ENCODE measurements at regions of chr16 and their contacts with region 1.

Region 1: DNA sequence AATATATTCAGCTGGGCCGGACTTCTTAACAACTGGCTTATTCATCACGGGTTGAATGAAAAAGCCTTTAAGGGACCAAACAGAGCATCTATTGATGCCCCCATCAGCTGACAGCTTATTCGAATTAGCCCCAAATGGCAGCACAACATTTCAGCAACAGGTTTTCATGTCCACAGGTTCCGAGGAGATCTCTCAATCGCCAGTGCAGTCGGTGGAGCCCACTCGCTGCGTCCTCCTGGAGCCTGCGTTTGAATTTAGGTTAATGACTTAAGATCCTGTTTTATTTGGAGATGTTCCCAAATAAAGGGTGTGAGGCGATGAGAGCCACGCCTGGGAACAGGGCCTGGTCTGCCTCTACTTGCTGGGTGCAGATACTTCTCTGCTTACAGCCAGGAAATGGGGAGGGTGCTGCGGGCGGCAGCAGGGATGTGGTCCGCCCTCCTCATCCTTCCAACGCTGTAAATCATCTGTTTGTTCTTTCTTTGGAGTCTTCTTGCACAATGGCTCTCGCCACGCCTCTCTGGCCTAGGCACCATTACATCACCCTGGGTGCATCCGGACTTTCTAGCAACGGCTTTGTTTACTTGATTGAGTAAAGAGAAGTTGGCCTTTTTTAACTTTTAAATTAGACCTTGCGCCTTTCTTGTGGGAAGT is 22.6 kb downstream of the NDE1 start:
- DNase-seq: peak; percentile 91
- ATAC-seq: peak; percentile 95
- H3K4me3 Mint-ChIP-seq: peak overlapping the region; percentile 71
- H3K27ac Mint-ChIP-seq: peak overlapping the region; percentile 97
- H3K4me1 Mint-ChIP-seq: peaks cover 57% of the 10 kb centered on the region
- H3K27me3 Mint-ChIP-seq: no peaks in the 10 kb centered on the region

Region 2: GRCh38 chr16:15650019-15650697 is 22.5 kb before region 1 on chr16 and contains the start of gene NDE1:
- CTCF ChIA-PET with region 1: interaction called, 10 read pairs
- POLR2A ChIA-PET with region 1: interaction called, 6 read pairs
- DNase-seq: peak; percentile 91
- ATAC-seq: peak; percentile 97
- H3K4me3 Mint-ChIP-seq: peak within 1 kb of the TSS; percentile 99
- H3K27ac Mint-ChIP-seq: peak within 1 kb of the TSS; percentile 98
- H3K4me1 Mint-ChIP-seq: peaks cover 33% of the 10 kb centered on the region
- H3K27me3 Mint-ChIP-seq: peaks cover 4% of the 10 kb centered on the region
- total RNA-seq, gene NDE1: 140 to 141 TPM

Measured in activated CD8-positive, alpha-beta T cell treated with anti-CD3 and anti-CD28 coated beads, Interleukin-2, amount 10 ng/mL, durations not matched to agents 7 days and 5 days (primary cell).